Left ventricle myocardium inferior (tissue), 1 donor: ENCODE measurements at regions of chr2 and their contacts with region 1.

Region 1: GRCh38 chr2:106104332-106105062 is 89.6 kb downstream of the UXS1 start:
- DNase-seq: no peak
- H3K4me3 ChIP-seq: no peak overlapping the region
- H3K27ac ChIP-seq: no peak overlapping the region
- H3K4me1 ChIP-seq: peaks cover 17% of the 10 kb centered on the region
- H3K27me3 ChIP-seq: no peaks in the 10 kb centered on the region
- CTCF ChIP-seq: peak; percentile 98

Region 2: GRCh38 chr2:106030287-106031268 is 73.9 kb before region 1 on chr2:
- intact Hi-C with region 1: no loop called
- DNase-seq: peak; percentile 44
- H3K4me3 ChIP-seq: peak overlapping the region; percentile 26
- H3K27ac ChIP-seq: peak overlapping the region; percentile 88
- H3K4me1 ChIP-seq: peaks cover 56% of the 10 kb centered on the region
- H3K27me3 ChIP-seq: no peaks in the 10 kb centered on the region
- CTCF ChIP-seq: no peak

Region 3: GRCh38 chr2:106582148-106583143 is 477.9 kb after region 1 on chr2:
- intact Hi-C with region 1: loop called (anchors 5 kb)
- DNase-seq: peak; percentile 58
- H3K4me3 ChIP-seq: peak overlapping the region; percentile 59
- H3K27ac ChIP-seq: no peak overlapping the region
- H3K4me1 ChIP-seq: peaks cover 13% of the 10 kb centered on the region
- H3K27me3 ChIP-seq: peaks cover 46% of the 10 kb centered on the region
- CTCF ChIP-seq: peak; percentile 84